HEK293 (cell line): ENCODE measurements at regions of chr12 and their contacts with region 1.

Region 1: DNA sequence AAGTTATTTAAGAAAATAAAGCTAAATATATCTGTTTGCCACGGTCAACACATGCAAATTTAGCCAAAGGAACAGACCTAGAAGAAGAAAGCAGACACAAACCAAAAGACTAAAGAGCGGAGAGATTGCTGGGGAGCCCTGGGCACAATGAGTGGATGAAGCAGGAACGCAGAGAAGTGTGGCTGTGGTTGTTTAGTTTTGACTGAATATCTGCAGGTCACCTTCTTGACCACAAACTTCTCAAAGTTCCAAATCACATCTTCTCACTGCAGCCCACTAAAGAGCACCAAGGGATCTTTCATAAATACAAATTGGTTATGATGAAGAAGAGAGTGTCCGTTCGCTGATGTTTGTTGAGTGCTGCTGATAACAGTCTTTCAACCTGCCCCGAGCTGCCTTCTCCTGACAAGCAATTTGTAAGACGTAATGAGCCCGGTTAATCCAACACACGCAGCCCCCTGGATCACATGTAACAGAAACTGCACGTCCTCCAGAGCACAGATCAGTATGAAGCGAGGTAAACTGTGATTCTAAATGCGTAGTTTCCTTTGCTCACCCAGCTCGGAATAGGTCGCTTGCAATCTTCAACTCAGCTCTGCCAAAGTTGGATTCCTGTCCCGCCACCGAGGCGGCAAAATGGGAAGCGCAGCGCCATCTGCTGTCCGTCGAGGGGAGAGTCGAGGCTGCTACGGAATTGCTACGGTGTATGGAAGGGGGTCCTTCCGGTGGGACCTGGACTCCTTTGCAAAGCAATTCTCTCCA is 120.8 kb downstream of the GXYLT1 start:
- H3K4me3 ChIP-seq: peak overlapping the region; percentile 19
- H3K27ac ChIP-seq: no peak overlapping the region; the same call in 1 of the 2 replicates
- H3K4me1 ChIP-seq: no peaks in the 10 kb centered on the region
- CTCF ChIP-seq: peak; percentile 91

Region 2: DNA sequence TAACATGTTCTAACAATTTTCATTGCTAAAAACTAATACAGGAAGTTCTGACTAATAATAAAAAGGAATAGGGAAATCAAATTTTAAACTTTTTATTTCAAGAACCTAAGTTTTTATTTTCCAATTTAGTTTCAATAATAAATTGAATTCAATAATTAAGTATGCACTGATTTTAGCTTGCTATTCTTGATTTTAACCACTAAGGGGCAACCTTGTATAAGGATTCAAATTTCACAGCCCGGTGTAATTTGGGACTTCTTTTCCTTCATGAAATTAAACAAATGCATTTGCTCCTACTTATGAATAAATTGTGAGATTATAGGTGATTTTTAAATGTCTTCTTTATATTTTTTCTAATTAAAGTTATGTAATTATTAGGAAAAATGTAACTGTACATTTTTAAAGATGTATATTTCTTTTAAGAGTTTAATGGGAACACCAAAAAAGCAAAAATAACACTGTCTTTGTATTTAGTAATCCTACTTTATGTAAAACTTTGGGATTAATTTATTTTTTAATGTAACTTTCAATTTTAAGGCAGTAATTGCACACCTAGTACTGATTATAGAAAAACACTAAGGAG is 1077.2 kb before region 1 on chr12:
- CTCF ChIA-PET with region 1: interaction called, 11 read pairs
- POLR2A ChIA-PET with region 1: no interaction called
- H3K4me3 ChIP-seq: no peak overlapping the region
- H3K27ac ChIP-seq: no peak overlapping the region
- H3K4me1 ChIP-seq: no peaks in the 10 kb centered on the region
- CTCF ChIP-seq: no peak

Region 3: DNA sequence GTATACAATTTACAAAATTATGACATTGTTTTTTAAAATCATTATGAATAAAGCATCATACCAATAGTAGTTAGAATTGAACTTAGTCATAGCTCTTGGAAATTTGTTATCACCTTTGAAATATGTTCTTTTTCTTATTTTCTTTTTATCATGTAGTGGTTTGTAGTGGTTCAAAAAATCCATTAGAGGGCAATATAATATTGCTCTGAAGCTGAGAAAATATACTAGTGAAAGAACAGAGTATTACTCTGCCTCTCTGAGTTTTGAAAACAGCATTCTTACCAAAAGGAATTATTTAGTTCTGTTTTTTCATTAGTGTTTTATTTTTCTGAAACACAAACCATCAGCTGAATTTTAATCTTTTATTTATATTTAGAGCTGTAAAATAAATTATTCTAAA is 759.6 kb before region 1 on chr12:
- CTCF ChIA-PET with region 1: interaction called, 13 read pairs
- POLR2A ChIA-PET with region 1: no interaction called
- H3K4me3 ChIP-seq: no peak overlapping the region
- H3K27ac ChIP-seq: no peak overlapping the region
- H3K4me1 ChIP-seq: no peaks in the 10 kb centered on the region
- CTCF ChIP-seq: no peak

Region 4: DNA sequence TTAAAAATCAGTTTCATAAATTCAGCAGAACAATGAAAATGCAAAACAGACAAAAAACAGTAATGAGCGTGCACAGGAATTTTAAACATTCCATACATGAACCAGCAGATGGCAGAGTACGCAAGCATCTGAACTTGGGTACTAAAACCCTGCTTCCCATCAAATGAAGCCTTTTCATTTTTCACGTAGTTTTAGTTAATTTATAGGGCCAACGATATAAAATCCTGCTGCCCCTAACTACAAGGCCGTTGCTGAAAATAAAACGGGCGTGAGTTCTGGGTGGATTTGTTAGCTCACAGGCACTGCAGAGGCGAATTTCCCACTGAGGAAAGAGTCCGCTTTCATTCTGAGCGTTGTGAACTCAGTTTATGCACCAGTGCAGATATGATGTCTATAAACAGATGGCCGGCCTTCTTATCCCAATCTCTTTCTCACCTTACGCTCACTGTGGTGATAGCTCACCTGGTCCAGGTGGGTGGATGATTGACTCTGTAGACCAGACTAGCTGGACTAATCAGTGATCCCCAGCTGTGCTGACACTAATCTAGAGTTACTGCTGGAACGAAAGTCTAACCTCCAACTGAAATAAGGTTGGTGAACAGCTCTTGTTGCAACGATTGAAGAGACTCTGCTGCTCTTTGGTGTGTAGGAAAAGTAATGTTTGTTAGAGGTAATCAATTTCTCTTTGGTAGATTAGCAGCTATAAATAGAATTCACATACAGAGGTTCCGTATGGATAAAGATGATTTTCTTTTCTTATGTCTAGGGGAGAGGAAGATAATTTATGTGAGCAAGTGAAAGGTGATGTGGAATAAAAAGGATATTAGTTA is 746.6 kb before region 1 on chr12:
- CTCF ChIA-PET with region 1: interaction called, 28 read pairs
- POLR2A ChIA-PET with region 1: no interaction called
- H3K4me3 ChIP-seq: no peak overlapping the region
- H3K27ac ChIP-seq: no peak overlapping the region
- H3K4me1 ChIP-seq: no peaks in the 10 kb centered on the region
- CTCF ChIP-seq: peak; percentile 65; the same call in 1 of the 2 replicates

Region 5: GRCh38 chr12:41684997-41685396 is 338.9 kb before region 1 on chr12:
- CTCF ChIA-PET with region 1: interaction called, 31 read pairs
- POLR2A ChIA-PET with region 1: no interaction called
- H3K4me3 ChIP-seq: no peak overlapping the region
- H3K27ac ChIP-seq: no peak overlapping the region
- H3K4me1 ChIP-seq: no peaks in the 10 kb centered on the region
- CTCF ChIP-seq: peak; percentile 40; the same call in 1 of the 2 replicates

Region 6: DNA sequence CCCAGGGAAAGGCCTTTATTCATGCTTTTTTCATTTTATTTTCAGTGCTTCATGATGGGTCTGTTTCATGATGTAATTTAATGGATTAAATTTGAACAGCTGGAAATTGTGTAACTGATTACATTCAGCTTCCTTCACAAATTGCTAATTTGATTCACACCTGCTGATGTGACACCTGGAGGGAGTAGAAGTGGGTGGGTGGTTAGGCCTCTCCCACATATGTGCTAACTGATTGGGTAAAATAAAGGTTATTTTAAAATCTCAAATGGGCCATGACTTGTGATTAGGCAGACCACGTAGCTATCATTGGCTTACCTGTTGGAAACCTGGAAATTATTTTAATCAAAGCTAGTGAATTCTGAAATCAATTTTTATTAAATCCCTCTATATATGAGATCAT is 21.4 kb before region 1 on chr12:
- CTCF ChIA-PET with region 1: interaction called, 12 read pairs
- POLR2A ChIA-PET with region 1: no interaction called
- H3K4me3 ChIP-seq: no peak overlapping the region
- H3K27ac ChIP-seq: no peak overlapping the region
- H3K4me1 ChIP-seq: no peaks in the 10 kb centered on the region
- CTCF ChIP-seq: no peak